Heart right ventricle (tissue), 16 donors: ENCODE measurements at regions of chr16 and their contacts with region 1.

Region 1: GRCh38 chr16:88437373-88437964 is 15.6 kb upstream of the ZFPM1 start:
- DNase-seq: peak in 1 of 2 donors; percentile 62
- ATAC-seq: peak in 6 of 8 donors; percentile 15 to 47 (median 19)
- H3K4me3 ChIP-seq: no peak overlapping the region
- H3K27ac ChIP-seq: no peak overlapping the region
- H3K4me1 ChIP-seq: peaks cover 0 to 7% (median 0%) of the 10 kb centered on the region in 9 donors
- H3K27me3 ChIP-seq: peaks cover 0 to 22% (median 9%) of the 10 kb centered on the region in 7 donors
- CTCF ChIP-seq: peak; percentile 77 to 89 (median 83)

Region 2: GRCh38 chr16:87970186-87970585 is 467.3 kb before region 1 on chr16:
- intact Hi-C with region 1: loop called in 1 of 10 experiments (anchors 10 kb)
- DNase-seq: no peak
- ATAC-seq: no peak
- H3K4me3 ChIP-seq: no peak overlapping the region
- H3K27ac ChIP-seq: no peak overlapping the region
- H3K4me1 ChIP-seq: peaks cover 0 to 28% (median 22%) of the 10 kb centered on the region in 9 donors
- H3K27me3 ChIP-seq: no peaks in the 10 kb centered on the region
- CTCF ChIP-seq: no peak

Region 3: GRCh38 chr16:87982491-87983415 is 454.7 kb before region 1 on chr16:
- intact Hi-C with region 1: loop called in 3 of 10 experiments (anchors 5 to 10 kb)
- DNase-seq: no peak
- ATAC-seq: peak in 5 of 8 donors; percentile 4 to 23 (median 12)
- H3K4me3 ChIP-seq: no peak overlapping the region
- H3K27ac ChIP-seq: no peak overlapping the region
- H3K4me1 ChIP-seq: peaks cover 0 to 37% (median 3%) of the 10 kb centered on the region in 9 donors
- H3K27me3 ChIP-seq: no peaks in the 10 kb centered on the region
- CTCF ChIP-seq: no peak

Region 4: DNA sequence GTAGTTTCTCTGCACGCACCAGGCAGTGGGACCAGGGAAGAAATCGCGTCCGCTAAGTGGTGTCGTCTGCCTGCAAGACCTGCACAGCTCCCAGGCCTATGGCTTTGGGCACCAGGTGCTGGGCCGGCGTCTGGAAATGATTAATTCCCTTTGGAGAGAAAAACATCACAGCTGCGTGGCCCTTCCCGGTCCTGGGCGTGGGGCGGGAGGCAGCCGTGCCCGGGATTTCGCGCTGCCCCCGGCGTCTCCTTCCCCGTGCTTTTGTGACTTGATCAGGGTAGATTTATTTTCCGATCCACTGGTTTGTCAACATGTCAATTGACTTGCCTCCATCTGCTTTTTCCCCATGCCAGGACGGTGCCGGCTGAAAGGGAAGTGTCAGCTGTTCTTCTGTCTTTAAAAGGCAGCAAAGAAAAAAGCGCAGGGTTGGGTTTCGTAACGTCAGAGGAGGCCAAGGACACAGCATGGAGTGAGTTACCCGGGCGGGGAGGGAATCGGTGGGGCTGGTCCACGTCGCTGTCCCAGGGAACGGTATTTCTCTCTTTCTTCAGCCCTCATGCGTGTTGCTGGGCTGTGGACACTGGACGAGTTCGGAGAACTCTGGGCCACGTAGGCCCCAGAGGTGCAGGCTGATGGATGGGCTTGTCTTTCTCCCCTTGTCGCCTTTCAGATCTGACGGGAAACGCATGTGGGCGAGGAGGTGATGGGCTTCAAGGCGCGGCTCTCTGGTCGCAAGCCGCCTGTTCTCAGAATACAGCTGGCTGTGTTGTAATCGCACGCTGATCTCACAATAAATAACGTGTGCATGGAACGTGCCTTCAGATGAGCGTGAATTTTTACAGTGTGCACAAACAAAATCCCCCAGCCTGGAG is 242.8 kb before region 1 on chr16:
- intact Hi-C with region 1: loop called (anchors 5 to 10 kb)
- DNase-seq: no peak
- ATAC-seq: peak in 4 of 8 donors; percentile 16 to 32 (median 30)
- H3K4me3 ChIP-seq: no peak overlapping the region
- H3K27ac ChIP-seq: no peak overlapping the region
- H3K4me1 ChIP-seq: peaks cover 0 to 3% (median 0%) of the 10 kb centered on the region in 9 donors
- H3K27me3 ChIP-seq: no peaks in the 10 kb centered on the region
- CTCF ChIP-seq: no peak